ENCODE measurements at regions of chrX and their contacts with region 1.

Region 1: DNA sequence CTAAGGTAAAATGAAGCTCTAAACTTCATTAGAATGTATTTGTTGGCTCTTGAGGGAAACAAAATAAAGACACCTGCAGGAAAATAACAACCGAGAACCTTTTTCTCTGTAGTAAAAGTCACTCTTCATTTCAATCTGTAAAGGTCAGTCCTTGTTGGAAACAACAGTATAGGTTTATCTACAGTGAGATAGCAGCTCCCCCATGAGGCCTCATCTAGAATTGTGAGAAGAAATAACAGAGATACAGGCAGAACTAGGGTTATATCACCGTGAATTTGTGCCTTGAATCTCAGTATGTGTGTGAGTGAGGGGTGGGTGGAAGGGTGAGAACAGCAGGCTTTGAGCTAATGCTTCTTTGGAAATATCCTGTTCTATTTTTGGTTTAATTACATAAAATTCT is 107.8 kb upstream of the FMR1 start:
- DNase-seq: peak in 1 of 9 donors; percentile 3
- ATAC-seq: no peak
- H3K4me3 ChIP-seq: no peak overlapping the region
- H3K4me3 Mint-ChIP-seq: no peak overlapping the region
- H3K27ac ChIP-seq: no peak overlapping the region
- H3K27ac Mint-ChIP-seq: no peak overlapping the region
- H3K4me1 ChIP-seq: no peaks in the 10 kb centered on the region
- H3K4me1 Mint-ChIP-seq: peaks cover 0 to 6% (median 0%) of the 10 kb centered on the region in 7 donors
- H3K27me3 ChIP-seq: no peaks in the 10 kb centered on the region
- H3K27me3 Mint-ChIP-seq: peaks cover 0 to 4% (median 0%) of the 10 kb centered on the region in 5 donors

Region 2: GRCh38 chrX:147476008-147476407 is 327.9 kb before region 1 on chrX:
- CTCF ChIA-PET with region 1: no interaction called
- POLR2A ChIA-PET with region 1: no interaction called
- intact Hi-C with region 1: loop called in 1 of 2 experiments (anchors 1 kb)
- DNase-seq: peak in 1 of 9 donors; percentile 1
- ATAC-seq: no peak
- H3K4me3 ChIP-seq: no peak overlapping the region
- H3K4me3 Mint-ChIP-seq: no peak overlapping the region
- H3K27ac ChIP-seq: no peak overlapping the region
- H3K27ac Mint-ChIP-seq: no peak overlapping the region
- H3K4me1 ChIP-seq: no peaks in the 10 kb centered on the region
- H3K4me1 Mint-ChIP-seq: no peaks in the 10 kb centered on the region
- H3K27me3 ChIP-seq: no peaks in the 10 kb centered on the region
- H3K27me3 Mint-ChIP-seq: no peaks in the 10 kb centered on the region

Region 3: GRCh38 chrX:147550217-147550616 is 253.7 kb before region 1 on chrX:
- CTCF ChIA-PET with region 1: no interaction called
- POLR2A ChIA-PET with region 1: no interaction called
- intact Hi-C with region 1: no loop called
- DNase-seq: no peak
- ATAC-seq: no peak
- H3K4me3 ChIP-seq: no peak overlapping the region
- H3K4me3 Mint-ChIP-seq: no peak overlapping the region
- H3K27ac ChIP-seq: no peak overlapping the region
- H3K27ac Mint-ChIP-seq: no peak overlapping the region
- H3K4me1 ChIP-seq: no peaks in the 10 kb centered on the region
- H3K4me1 Mint-ChIP-seq: peaks cover 0 to 1% (median 0%) of the 10 kb centered on the region in 7 donors
- H3K27me3 ChIP-seq: no peaks in the 10 kb centered on the region
- H3K27me3 Mint-ChIP-seq: peaks cover 0 to 3% (median 0%) of the 10 kb centered on the region in 5 donors

Region 4: DNA sequence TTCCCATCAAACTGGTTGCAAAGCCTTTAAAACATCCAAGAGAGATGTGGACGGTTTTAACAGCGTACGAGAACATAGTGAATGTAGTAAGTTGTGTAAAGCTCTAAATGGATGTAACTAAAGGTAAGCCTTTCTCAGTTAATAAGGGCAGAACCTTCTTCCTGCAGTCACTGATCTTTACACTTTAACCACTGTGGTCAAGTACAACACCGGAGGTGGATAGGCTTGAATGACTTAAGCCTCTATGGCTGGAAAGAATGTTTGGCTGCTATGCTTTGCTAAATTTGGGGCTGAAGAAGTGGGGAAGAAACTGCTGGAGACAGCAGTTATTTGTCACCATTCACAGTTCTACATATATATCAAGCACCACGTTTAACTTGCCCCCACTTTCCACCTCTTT is 177.3 kb before region 1 on chrX:
- CTCF ChIA-PET with region 1: no interaction called
- POLR2A ChIA-PET with region 1: no interaction called
- intact Hi-C with region 1: loop called in 1 of 2 experiments (anchors 10 kb)
- DNase-seq: no peak
- ATAC-seq: no peak
- H3K4me3 ChIP-seq: no peak overlapping the region
- H3K4me3 Mint-ChIP-seq: no peak overlapping the region
- H3K27ac ChIP-seq: no peak overlapping the region
- H3K27ac Mint-ChIP-seq: no peak overlapping the region
- H3K4me1 ChIP-seq: no peaks in the 10 kb centered on the region
- H3K4me1 Mint-ChIP-seq: no peaks in the 10 kb centered on the region
- H3K27me3 ChIP-seq: no peaks in the 10 kb centered on the region
- H3K27me3 Mint-ChIP-seq: no peaks in the 10 kb centered on the region

Region 5: GRCh38 chrX:147763131-147763530 is 40.8 kb before region 1 on chrX:
- CTCF ChIA-PET with region 1: no interaction called
- POLR2A ChIA-PET with region 1: no interaction called
- intact Hi-C with region 1: loop called in 1 of 2 experiments (anchors 1 kb)
- DNase-seq: peak in 1 of 9 donors; percentile 5
- ATAC-seq: no peak
- H3K4me3 ChIP-seq: no peak overlapping the region
- H3K4me3 Mint-ChIP-seq: peak overlapping the region in 3 of 10 donors; percentile 16 to 64 (median 19)
- H3K27ac ChIP-seq: no peak overlapping the region
- H3K27ac Mint-ChIP-seq: peak overlapping the region in 1 of 9 donors; percentile 73
- H3K4me1 ChIP-seq: no peaks in the 10 kb centered on the region
- H3K4me1 Mint-ChIP-seq: peaks cover 0 to 21% (median 8%) of the 10 kb centered on the region in 7 donors
- H3K27me3 ChIP-seq: no peaks in the 10 kb centered on the region
- H3K27me3 Mint-ChIP-seq: peaks cover 0 to 3% (median 0%) of the 10 kb centered on the region in 5 donors

Region 6: GRCh38 chrX:147859666-147860065 is 55.7 kb after region 1 on chrX:
- CTCF ChIA-PET with region 1: no interaction called
- POLR2A ChIA-PET with region 1: no interaction called
- intact Hi-C with region 1: no loop called
- DNase-seq: no peak
- ATAC-seq: no peak
- H3K4me3 ChIP-seq: no peak overlapping the region
- H3K4me3 Mint-ChIP-seq: no peak overlapping the region
- H3K27ac ChIP-seq: no peak overlapping the region
- H3K27ac Mint-ChIP-seq: no peak overlapping the region
- H3K4me1 ChIP-seq: no peaks in the 10 kb centered on the region
- H3K4me1 Mint-ChIP-seq: no peaks in the 10 kb centered on the region
- H3K27me3 ChIP-seq: no peaks in the 10 kb centered on the region
- H3K27me3 Mint-ChIP-seq: peaks cover 0 to 4% (median 0%) of the 10 kb centered on the region in 5 donors